Natural killer cell (primary cell): ENCODE measurements at regions of chr17 and their contacts with region 1.

Region 1: GRCh38 chr17:22669721-22670120 is 977.4 kb downstream of the KCNJ18 start:
- DNase-seq: no peak
- ATAC-seq: no peak
- H3K4me3 ChIP-seq: no peak overlapping the region
- H3K4me3 Mint-ChIP-seq: no peak overlapping the region
- H3K27ac ChIP-seq: no peak overlapping the region
- H3K27ac Mint-ChIP-seq: no peak overlapping the region
- H3K4me1 ChIP-seq: no peaks in the 10 kb centered on the region
- H3K4me1 Mint-ChIP-seq: no peaks in the 10 kb centered on the region
- H3K27me3 ChIP-seq: no peaks in the 10 kb centered on the region
- H3K27me3 Mint-ChIP-seq: no peaks in the 10 kb centered on the region
- CTCF ChIP-seq: no peak

Region 2: GRCh38 chr17:22600644-22601303 is 68.9 kb before region 1 on chr17:
- intact Hi-C with region 1: loop called (anchors 10 kb)
- DNase-seq: no peak
- ATAC-seq: no peak
- H3K4me3 ChIP-seq: no peak overlapping the region
- H3K4me3 Mint-ChIP-seq: no peak overlapping the region
- H3K27ac ChIP-seq: no peak overlapping the region
- H3K27ac Mint-ChIP-seq: no peak overlapping the region
- H3K4me1 ChIP-seq: no peaks in the 10 kb centered on the region
- H3K4me1 Mint-ChIP-seq: no peaks in the 10 kb centered on the region
- H3K27me3 ChIP-seq: no peaks in the 10 kb centered on the region
- H3K27me3 Mint-ChIP-seq: no peaks in the 10 kb centered on the region
- CTCF ChIP-seq: no peak